Activated CD4-positive, alpha-beta T cell treated with anti-CD3 and anti-CD28 coated beads for 36 hours (primary cell): ENCODE measurements at regions of chr5 and their contacts with region 1.

Region 1: DNA sequence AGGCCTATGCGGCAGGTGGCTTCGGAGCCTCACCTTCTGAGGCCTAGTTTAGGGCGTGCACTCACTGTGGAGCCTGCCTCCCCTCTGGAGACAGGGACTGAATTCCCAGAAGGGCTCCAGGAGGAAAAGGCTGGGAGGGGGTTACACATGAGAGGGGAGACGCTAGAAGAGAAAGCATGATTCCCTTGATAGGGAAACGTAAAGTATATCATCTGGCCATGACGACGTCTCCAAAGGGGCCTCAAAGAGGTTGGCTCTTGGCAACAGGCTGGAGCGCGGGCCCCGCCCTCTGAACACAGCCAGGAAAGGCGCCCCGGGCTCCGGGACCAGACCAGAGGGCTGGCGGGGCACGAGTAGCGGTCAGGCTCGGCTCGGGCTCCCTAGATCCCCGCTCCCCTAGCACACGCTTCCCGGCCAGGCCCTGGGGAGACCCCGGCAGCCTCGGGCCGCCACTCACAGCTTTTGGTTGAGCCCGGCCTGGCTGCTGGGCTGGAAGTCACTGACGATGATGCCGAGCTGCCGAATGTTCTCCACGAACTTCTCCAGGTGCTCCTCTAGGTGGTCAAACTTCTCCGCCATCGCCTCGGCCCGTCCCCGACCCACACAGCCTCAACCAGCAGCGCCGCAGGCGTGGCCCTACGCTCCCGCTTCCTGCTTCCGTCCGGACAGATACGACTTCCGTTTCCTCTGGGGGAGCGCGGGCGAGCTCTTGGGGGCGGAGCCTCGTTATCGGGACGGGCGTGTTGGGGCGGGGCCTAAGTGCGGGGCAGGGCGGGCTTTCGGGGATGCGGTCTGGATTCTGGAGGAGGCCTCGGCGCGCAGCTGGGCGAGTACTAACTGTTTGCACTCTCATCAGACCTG is at the start of gene MED10:
- DNase-seq: peak; percentile 98
- ATAC-seq: peak; percentile 96
- H3K4me3 Mint-ChIP-seq: peak within 1 kb of the TSS; percentile 96
- H3K27ac Mint-ChIP-seq: peak within 1 kb of the TSS; percentile 97
- H3K4me1 Mint-ChIP-seq: peaks cover 38% of the 10 kb centered on the region
- H3K27me3 Mint-ChIP-seq: no peaks in the 10 kb centered on the region
- total RNA-seq, gene MED10: 40.4 to 50.8 TPM

Region 2: GRCh38 chr5:5421961-5422818 is 955.9 kb before region 1 on chr5 and contains the start of gene ICE1:
- CTCF ChIA-PET with region 1: no interaction called
- POLR2A ChIA-PET with region 1: interaction called, 3 read pairs
- intact Hi-C with region 1: loop called (anchors 1 to 2 kb)
- DNase-seq: peak; percentile 95
- ATAC-seq: peak; percentile 91
- H3K4me3 Mint-ChIP-seq: peak within 1 kb of the TSS; percentile 90
- H3K27ac Mint-ChIP-seq: peak within 1 kb of the TSS; percentile 91
- H3K4me1 Mint-ChIP-seq: peaks cover 12% of the 10 kb centered on the region
- H3K27me3 Mint-ChIP-seq: no peaks in the 10 kb centered on the region
- total RNA-seq, gene ICE1: 26.5 to 27.4 TPM

Region 3: DNA sequence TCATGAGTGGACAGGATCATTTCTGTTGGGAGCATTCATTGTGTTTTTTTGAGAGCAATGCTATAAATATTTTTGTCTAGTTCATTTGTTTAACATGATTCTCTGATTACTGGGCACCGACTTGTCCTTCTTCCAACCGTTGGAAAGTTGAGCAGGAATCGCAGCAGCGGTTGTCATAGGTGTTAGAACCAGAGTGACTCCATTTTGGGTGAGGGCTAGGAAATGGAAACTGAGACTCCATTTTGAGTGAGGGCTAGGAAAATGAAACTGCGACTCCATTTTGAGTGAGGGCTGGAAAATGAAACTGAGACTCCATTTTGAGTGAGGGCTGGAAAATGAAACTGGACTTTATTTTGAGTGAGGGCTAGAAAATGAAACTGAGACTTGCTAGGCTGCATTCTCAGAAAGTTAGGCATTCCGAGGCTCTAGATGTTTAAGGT is 855.0 kb before region 1 on chr5:
- CTCF ChIA-PET with region 1: no interaction called
- POLR2A ChIA-PET with region 1: no interaction called
- intact Hi-C with region 1: loop called in 1 of 2 experiments (anchors 2 kb)
- DNase-seq: peak; percentile 19
- ATAC-seq: peak; percentile 82
- H3K4me3 Mint-ChIP-seq: no peak overlapping the region
- H3K27ac Mint-ChIP-seq: peak overlapping the region; percentile 80
- H3K4me1 Mint-ChIP-seq: peaks cover 31% of the 10 kb centered on the region
- H3K27me3 Mint-ChIP-seq: no peaks in the 10 kb centered on the region

Region 4: GRCh38 chr5:6496207-6496584 is 118.1 kb after region 1 on chr5:
- CTCF ChIA-PET with region 1: no interaction called
- POLR2A ChIA-PET with region 1: no interaction called
- intact Hi-C with region 1: loop called in 1 of 2 experiments (anchors 2 kb)
- DNase-seq: peak; percentile 51
- ATAC-seq: peak; percentile 90
- H3K4me3 Mint-ChIP-seq: no peak overlapping the region
- H3K27ac Mint-ChIP-seq: no peak overlapping the region
- H3K4me1 Mint-ChIP-seq: peaks cover 21% of the 10 kb centered on the region
- H3K27me3 Mint-ChIP-seq: peaks cover 12% of the 10 kb centered on the region

Region 5: DNA sequence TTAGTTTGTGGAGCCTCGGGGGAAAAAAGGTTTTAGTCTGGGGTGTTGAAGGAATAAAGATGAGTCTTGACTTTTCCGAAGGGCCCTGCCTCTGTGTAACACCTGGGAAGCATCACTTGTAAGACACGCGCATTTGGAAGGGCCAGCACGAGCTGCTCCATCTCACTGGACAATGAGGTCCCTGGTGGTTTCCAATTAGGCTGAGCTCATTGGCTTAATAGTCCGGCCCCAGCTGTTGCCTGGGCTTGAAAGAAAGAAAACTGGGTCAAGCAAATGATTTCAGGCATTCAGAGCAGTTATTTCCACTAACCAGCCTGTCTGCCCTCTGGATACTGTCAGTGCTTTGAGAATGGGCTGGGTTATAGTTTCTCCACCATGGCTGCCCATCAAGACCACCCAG is 190.2 kb after region 1 on chr5:
- CTCF ChIA-PET with region 1: no interaction called
- POLR2A ChIA-PET with region 1: no interaction called
- intact Hi-C with region 1: no loop called
- DNase-seq: no peak
- ATAC-seq: no peak
- H3K4me3 Mint-ChIP-seq: no peak overlapping the region
- H3K27ac Mint-ChIP-seq: no peak overlapping the region
- H3K4me1 Mint-ChIP-seq: no peaks in the 10 kb centered on the region
- H3K27me3 Mint-ChIP-seq: peaks cover 23% of the 10 kb centered on the region

Region 6: DNA sequence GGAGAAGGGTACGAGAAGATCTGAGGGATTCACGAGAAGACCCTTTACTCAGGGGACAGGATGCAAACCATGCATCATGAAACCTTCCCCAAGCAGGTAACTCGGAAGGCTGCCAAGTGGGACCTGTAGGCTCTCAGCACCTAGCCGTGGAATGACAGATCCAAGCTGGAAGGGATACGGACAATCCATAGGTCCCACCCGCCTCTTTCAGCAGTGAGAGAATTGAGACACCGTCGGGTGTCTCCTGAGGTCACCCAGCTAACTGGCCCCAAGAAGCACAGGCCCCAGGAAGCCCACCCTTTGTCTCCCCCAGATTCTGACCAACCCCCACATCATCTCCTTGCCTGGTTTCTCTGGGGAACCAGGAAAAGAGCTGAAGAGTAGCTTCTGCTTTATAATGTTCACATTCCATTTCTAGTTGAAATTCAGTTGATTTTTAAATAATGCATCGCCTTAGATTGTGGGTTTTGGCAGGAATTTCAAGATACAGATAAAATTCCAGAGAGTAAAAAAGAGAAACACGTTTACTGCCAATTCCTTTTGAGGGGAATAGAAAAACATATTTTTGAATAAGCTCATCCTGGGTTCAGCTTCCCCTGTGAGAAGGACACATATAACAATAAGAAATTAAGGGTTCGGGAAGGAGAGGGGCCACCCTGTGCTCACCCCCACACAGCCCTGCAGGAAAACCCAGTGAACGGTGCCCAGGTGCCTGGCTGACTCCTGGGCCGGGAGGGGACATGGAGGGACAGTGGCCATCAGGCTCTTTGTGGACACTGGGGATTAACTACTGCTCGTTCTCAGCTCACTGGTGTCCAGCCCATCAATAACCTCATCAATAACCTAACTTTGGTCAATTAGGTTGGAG is 203.7 kb after region 1 on chr5:
- CTCF ChIA-PET with region 1: no interaction called
- POLR2A ChIA-PET with region 1: no interaction called
- intact Hi-C with region 1: no loop called
- DNase-seq: no peak
- ATAC-seq: no peak
- H3K4me3 Mint-ChIP-seq: no peak overlapping the region
- H3K27ac Mint-ChIP-seq: no peak overlapping the region
- H3K4me1 Mint-ChIP-seq: peaks cover 3% of the 10 kb centered on the region
- H3K27me3 Mint-ChIP-seq: peaks cover 51% of the 10 kb centered on the region

Region 7: DNA sequence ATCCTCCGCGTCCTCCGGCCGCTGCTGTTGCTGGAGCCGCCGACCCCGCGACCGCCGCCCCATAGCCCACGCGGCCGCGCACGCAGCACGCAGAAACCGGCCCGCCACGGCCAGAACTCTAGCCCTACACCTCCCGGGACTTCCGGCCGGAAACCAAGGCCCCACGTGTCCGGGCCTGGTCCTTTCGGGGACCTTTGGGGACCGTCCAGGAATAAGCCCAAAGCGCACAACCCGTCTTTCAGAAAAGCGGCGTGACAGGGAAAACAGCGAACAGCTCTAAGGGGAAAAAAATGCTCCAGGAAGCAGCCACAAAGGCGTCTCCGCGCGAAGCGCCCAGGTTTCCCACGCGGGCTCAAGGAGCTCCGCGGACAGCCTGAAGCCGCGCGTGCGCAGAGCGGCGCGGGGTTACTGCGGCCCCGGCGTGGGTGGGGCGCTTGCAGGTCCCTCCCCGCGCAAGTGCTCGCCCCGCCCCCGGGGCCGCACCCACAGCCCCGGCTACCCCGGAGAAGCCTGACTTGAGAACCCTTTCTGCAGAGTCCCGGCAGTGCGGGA is 254.9 kb after region 1 on chr5 and contains the starts of genes NSUN2 and SRD5A1:
- CTCF ChIA-PET with region 1: no interaction called
- POLR2A ChIA-PET with region 1: interaction called, 5 read pairs
- intact Hi-C with region 1: loop called (anchors 1 to 2 kb)
- DNase-seq: peak; percentile 96
- ATAC-seq: peak; percentile 89
- H3K4me3 Mint-ChIP-seq: peak within 1 kb of the TSS; percentile 99
- H3K27ac Mint-ChIP-seq: peak within 1 kb of the TSS; percentile 98
- H3K4me1 Mint-ChIP-seq: peaks cover 31% of the 10 kb centered on the region
- H3K27me3 Mint-ChIP-seq: no peaks in the 10 kb centered on the region
- total RNA-seq, gene NSUN2: 91.1 to 97.1 TPM
- total RNA-seq, gene SRD5A1: 7.6 to 11.1 TPM

Region 8: DNA sequence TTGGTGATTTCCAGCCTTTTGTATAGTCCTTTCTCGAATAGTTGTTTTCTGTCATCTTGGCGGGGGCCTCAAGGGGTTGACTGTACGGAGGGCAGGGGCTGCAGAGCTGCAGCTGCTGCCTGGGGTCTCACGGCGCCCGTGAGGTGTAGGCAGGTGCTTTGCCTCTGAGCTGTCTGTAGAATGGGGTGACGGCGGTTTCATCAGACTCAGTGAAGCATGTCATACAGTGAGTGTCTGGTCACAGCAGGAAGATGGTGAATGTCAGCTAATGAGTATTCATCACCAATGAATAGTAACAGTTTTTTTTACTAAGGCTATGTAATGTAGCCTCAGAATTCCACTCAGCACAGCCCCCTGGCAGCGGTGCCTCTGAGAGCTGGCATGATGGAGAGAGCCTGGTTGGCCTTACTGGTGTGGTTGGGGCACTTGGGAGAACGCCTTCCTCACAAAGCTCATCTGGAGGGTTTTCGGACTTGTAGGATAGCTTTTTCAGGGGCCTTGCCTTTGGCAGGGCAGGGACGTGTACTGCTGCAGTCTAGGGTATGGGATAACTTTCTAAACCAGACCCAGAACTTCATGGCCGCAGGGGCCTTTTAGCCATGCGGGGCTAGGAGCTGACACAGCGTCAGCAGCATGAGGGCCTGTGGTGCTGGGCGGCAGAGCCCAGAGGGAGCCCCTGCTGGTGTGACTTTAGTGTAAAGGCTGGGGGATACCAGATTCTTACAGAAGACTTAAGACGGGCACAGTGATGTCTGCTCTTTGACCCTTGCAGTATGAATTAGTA is 350.1 kb after region 1 on chr5:
- CTCF ChIA-PET with region 1: no interaction called
- POLR2A ChIA-PET with region 1: no interaction called
- intact Hi-C with region 1: loop called in 1 of 2 experiments (anchors 5 kb)
- DNase-seq: peak; percentile 42
- ATAC-seq: peak; percentile 52
- H3K4me3 Mint-ChIP-seq: no peak overlapping the region
- H3K27ac Mint-ChIP-seq: peak overlapping the region; percentile 85
- H3K4me1 Mint-ChIP-seq: peaks cover 91% of the 10 kb centered on the region
- H3K27me3 Mint-ChIP-seq: no peaks in the 10 kb centered on the region

Region 9: DNA sequence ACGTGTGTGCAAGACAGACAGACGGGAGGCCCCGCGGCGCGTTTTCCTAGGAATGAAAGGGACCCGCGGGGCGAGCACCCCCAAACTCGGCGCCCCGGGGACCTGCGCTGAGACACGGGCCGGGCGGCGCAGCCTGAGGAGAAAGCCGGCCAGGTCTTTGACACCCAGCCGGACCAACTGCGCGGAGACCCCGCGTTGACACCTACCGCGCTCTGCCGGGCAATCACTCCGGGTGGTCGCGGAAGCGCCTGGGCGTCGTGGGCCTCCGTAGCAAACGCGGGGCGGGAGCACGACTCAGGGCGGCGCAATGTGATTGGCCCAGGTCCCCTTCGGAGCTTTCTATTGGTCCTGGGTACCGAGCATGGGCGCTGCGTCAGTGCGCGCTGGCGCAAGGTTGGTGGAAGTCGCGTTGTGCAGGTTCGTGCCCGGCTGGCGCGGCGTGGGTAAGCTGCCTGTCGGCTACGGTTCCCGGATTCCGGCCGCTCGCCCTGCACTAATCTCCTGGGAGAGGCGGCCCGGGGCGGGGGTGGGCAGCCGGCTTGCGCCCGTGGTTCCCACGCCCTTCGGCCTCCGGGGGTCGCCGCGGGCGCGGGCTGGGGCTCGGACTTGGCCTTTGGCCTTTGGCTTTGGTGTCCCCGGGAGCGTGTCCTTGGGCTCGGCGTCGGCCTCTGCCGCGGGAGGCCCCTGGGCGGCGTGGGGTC is 1490.8 kb after region 1 on chr5 and contains the starts of genes FASTKD3 and MTRR:
- CTCF ChIA-PET with region 1: no interaction called
- POLR2A ChIA-PET with region 1: no interaction called
- intact Hi-C with region 1: loop called in 1 of 2 experiments (anchors 5 kb)
- DNase-seq: peak; percentile 93
- ATAC-seq: peak; percentile 99
- H3K4me3 Mint-ChIP-seq: peak within 1 kb of the TSS; percentile 94
- H3K27ac Mint-ChIP-seq: peak within 1 kb of the TSS; percentile 95
- H3K4me1 Mint-ChIP-seq: peaks cover 68% of the 10 kb centered on the region
- H3K27me3 Mint-ChIP-seq: no peaks in the 10 kb centered on the region
- total RNA-seq, gene FASTKD3: 9.2 to 9.6 TPM
- total RNA-seq, gene MTRR: 49.3 to 52.9 TPM